ENCODE measurements at regions of chr12 and their contacts with region 1.

Region 1: DNA sequence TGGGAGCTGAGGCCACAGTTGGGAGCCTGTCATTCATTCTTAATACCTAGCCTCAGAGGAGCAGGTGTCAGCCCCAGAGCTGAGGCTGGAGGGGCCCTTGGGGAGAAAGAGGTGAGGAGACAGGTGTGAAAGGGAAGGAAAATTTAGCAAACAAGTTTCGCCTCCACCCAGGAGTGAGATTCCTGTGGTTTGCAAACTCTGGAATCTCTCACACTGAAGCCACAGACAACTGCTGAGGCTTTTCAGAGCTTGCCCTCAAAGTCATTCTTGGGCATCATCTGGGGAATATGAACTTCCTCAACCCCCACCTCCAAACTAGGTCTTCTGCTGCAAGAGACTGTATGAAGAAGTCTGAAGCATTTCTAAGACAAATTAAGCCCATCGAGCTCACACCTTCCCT is 589.5 kb upstream of the TBX3 start:
- DNase-seq: no peak
- H3K4me3 ChIP-seq: no peak overlapping the region
- H3K27ac ChIP-seq: no peak overlapping the region
- H3K4me1 ChIP-seq: no peaks in the 10 kb centered on the region
- H3K27me3 ChIP-seq: no peaks in the 10 kb centered on the region
- CTCF ChIP-seq: no peak
- EP300 ChIP-seq: no peak
- POLR2A ChIP-seq: no peak

Region 2: GRCh38 chr12:113926788-113927187 is 1346.7 kb before region 1 on chr12:
- in situ Hi-C with region 1: no loop called
- intact Hi-C with region 1: no loop called
- DNase-seq: no peak
- H3K4me3 ChIP-seq: no peak overlapping the region
- H3K27ac ChIP-seq: no peak overlapping the region
- H3K4me1 ChIP-seq: no peaks in the 10 kb centered on the region
- H3K27me3 ChIP-seq: no peaks in the 10 kb centered on the region
- CTCF ChIP-seq: no peak
- EP300 ChIP-seq: no peak
- POLR2A ChIP-seq: no peak

Region 3: DNA sequence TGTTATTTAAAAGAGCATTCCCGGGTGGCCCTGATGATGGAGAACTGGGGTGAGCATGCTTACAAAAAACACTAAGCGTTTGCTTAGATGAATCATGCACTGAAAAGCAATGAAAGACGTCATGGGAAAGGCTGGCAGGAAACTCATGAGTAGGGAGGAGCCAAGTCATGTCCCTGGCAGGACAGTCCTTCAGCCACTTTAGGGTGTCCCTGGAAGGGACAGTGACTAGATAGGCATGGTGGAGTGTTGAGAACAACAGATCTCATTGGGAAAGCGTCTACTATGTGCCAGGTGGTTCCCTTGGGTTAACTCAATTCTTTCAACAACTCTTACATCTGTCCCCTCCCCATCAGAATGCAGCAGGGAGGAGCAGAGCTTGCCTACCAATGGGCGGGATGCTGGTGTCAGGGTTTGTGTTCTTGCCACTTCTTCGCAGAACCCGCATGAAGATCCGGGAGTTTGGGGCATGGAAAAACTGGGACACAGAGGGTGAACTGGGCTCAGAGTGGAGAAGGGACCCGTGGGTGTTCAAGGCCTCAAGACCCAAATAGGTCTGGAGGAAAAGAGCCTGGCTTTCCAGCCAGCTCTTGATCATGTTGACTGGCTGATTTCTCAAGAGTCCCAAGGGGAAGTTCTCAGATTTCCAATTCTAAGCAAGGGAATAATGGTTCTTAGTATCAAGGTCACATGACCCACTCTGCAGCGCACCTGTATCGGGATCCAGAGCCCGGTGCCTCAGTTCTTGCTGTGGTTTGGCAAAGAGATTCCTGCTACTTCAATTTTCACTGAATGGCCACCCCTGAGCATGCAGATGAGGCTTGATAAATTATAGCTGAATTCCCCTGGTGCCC is 64.5 kb after region 1 on chr12:
- in situ Hi-C with region 1: no loop called
- intact Hi-C with region 1: loop called (anchors 2 kb)
- DNase-seq: peak; percentile 17
- H3K4me3 ChIP-seq: no peak overlapping the region
- H3K27ac ChIP-seq: peak overlapping the region; percentile 13 to 47 (median 34)
- H3K4me1 ChIP-seq: peaks cover 0 to 9% (median 0%) of the 10 kb centered on the region in 4 donors
- H3K27me3 ChIP-seq: no peaks in the 10 kb centered on the region
- CTCF ChIP-seq: no peak
- EP300 ChIP-seq: no peak
- POLR2A ChIP-seq: no peak

Measured in transverse colon (tissue), 4 donors.